Head of caudate nucleus (tissue), 42 donors: ENCODE measurements at regions of chr2 and their contacts with region 1.

Region 1: DNA sequence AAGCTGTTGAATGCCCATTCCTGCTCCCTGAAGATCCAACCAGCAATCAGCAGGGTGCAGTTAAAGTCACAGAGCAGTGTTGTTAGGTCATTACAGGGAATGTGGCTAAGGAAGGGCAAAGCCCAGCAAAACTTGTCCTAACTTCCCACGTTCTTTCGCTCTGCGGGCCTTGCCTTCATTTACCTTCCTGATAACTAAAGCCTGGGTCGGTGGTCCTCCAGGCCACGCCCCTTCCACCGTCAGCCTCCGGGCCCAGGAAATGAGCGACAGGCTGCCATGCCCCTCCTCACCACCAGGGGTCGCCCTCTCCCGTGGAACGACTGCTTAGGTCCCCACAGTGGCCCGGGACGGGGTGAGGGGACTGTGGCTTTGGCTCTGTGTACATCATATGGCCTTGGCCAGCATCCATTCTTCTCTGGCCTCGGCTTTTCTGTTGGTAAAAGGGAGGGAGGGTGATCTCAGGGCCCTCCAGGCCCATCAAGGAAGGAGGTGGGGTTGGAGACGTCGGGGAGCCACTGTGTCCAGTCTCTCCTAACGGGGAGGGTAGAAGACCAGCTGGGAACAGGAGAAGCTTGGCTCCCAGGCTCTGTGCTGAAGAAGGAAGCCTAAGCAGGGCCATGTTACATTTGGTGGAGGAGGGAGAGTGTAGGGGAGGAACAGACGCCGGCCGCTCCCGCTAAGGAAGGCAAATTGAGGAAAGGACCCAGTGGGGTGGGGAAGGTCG is 2.2 kb downstream of the SH2D6 start:
- DNase-seq: peak; percentile 81 to 99 (median 93)

Region 2: GRCh38 chr2:84362541-84362940 is 1058.2 kb before region 1 on chr2:
- intact Hi-C with region 1: no loop called
- DNase-seq: no peak

Region 3: GRCh38 chr2:85354286-85355072 is 66.2 kb before region 1 on chr2 and contains the starts of genes ELMOD3 and RETSAT:
- intact Hi-C with region 1: loop called (anchors 2 kb)
- DNase-seq: peak; percentile 91 to 99 (median 96)

Region 4: GRCh38 chr2:85551698-85552678 is 131.3 kb after region 1 on chr2:
- intact Hi-C with region 1: loop called (anchors 2 kb)
- DNase-seq: peak; percentile 59 to 96 (median 89)